ENCODE measurements at regions of chr15 and their contacts with region 1.

Region 1: GRCh38 chr15:79339564-79340314 is 28.8 kb downstream of the TMED3 start:
- DNase-seq: peak; percentile 10
- H3K4me3 ChIP-seq: no peak overlapping the region
- H3K27ac ChIP-seq: no peak overlapping the region
- H3K27me3 ChIP-seq: no peaks in the 10 kb centered on the region
- CTCF ChIP-seq: peak; percentile 98

Region 2: DNA sequence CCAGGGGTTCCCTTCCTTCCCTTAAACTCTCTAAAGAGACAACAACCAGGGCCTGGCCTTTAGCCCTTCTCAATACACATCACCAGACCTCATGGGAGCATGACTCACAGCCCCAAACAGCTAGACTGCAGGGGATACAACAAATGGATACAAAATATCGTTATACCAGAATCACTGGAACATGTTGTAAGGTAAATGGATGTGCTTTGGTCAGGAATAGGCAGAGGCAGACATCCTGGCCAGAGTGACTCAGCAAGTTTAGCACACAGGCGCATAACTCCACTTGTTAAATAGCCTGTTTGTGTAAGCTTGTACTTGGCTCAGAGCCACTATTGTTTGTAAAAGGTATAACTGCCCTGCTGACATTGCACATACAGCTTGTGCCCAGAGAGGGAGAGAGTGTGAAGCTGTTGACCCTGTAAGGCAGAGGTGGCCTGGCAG is 10.5 kb before region 1 on chr15:
- CTCF ChIA-PET with region 1: interaction called, 23 read pairs
- POLR2A ChIA-PET with region 1: no interaction called
- DNase-seq: peak; percentile 11
- H3K4me3 ChIP-seq: no peak overlapping the region
- H3K27ac ChIP-seq: peak overlapping the region; percentile 62
- H3K27me3 ChIP-seq: no peaks in the 10 kb centered on the region
- CTCF ChIP-seq: no peak

Region 3: DNA sequence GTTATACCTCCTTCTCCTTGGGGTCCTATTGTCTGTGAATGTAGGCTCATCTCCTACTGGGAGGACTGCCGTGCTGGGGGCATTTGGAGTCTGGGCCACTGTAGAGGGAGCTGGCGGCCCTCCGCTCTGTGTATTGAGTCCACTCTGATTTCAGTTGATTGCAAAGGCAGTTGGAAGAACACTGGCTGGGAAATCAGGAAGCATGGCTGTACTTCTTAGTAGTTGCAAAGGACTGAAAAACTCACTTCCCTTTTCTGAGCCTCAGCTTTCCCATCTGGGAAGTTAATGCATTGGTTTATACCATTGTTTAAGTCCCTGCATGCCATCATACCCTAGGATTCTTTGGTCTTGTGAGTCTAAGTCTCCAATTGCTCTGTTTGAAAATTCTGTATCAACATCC is 17.8 kb after region 1 on chr15:
- CTCF ChIA-PET with region 1: interaction called, 24 read pairs
- POLR2A ChIA-PET with region 1: no interaction called
- DNase-seq: no peak
- H3K4me3 ChIP-seq: no peak overlapping the region
- H3K27ac ChIP-seq: no peak overlapping the region
- H3K27me3 ChIP-seq: no peaks in the 10 kb centered on the region
- CTCF ChIP-seq: no peak

Region 4: GRCh38 chr15:79364571-79365240 is 25.0 kb after region 1 on chr15:
- CTCF ChIA-PET with region 1: interaction called, 17 read pairs
- POLR2A ChIA-PET with region 1: no interaction called
- DNase-seq: no peak
- H3K4me3 ChIP-seq: no peak overlapping the region
- H3K27ac ChIP-seq: no peak overlapping the region
- H3K27me3 ChIP-seq: no peaks in the 10 kb centered on the region
- CTCF ChIP-seq: no peak

Region 5: DNA sequence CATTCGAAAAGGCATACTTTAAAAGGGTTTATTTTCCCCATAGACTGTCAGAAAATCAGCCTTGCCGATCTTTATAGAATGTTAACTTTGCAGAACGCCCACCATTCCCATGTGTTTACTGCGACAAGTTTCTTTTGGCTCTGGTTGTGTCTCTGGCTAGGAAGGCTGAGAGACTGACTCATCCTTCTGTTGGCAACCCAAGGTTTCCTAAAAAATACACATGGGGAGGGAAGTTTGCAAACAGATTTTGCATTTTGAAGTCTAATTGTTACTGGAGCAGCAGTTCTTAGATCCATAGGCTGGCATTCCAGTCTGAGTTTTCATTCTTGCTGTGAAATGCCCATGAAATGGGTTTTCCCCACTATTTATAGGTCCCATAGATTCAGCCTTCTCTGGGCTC is 54.5 kb after region 1 on chr15:
- CTCF ChIA-PET with region 1: interaction called, 10 read pairs
- POLR2A ChIA-PET with region 1: no interaction called
- DNase-seq: peak; percentile 8
- H3K4me3 ChIP-seq: no peak overlapping the region
- H3K27ac ChIP-seq: no peak overlapping the region
- H3K27me3 ChIP-seq: no peaks in the 10 kb centered on the region
- CTCF ChIP-seq: no peak

Region 6: GRCh38 chr15:79596051-79596507 is 256.3 kb after region 1 on chr15:
- CTCF ChIA-PET with region 1: interaction called, 28 read pairs
- POLR2A ChIA-PET with region 1: no interaction called
- DNase-seq: peak; percentile 27
- H3K4me3 ChIP-seq: no peak overlapping the region
- H3K27ac ChIP-seq: no peak overlapping the region
- H3K27me3 ChIP-seq: peaks cover 5% of the 10 kb centered on the region
- CTCF ChIP-seq: peak; percentile 83

Region 7: GRCh38 chr15:79989682-79990081 is 649.9 kb after region 1 on chr15:
- CTCF ChIA-PET with region 1: interaction called, 17 read pairs
- POLR2A ChIA-PET with region 1: no interaction called
- DNase-seq: no peak
- H3K4me3 ChIP-seq: no peak overlapping the region
- H3K27ac ChIP-seq: no peak overlapping the region
- H3K27me3 ChIP-seq: no peaks in the 10 kb centered on the region
- CTCF ChIP-seq: no peak

Measured in AG04450 (cell line).